ENCODE measurements at regions of chr2 and their contacts with region 1.

Region 1: DNA sequence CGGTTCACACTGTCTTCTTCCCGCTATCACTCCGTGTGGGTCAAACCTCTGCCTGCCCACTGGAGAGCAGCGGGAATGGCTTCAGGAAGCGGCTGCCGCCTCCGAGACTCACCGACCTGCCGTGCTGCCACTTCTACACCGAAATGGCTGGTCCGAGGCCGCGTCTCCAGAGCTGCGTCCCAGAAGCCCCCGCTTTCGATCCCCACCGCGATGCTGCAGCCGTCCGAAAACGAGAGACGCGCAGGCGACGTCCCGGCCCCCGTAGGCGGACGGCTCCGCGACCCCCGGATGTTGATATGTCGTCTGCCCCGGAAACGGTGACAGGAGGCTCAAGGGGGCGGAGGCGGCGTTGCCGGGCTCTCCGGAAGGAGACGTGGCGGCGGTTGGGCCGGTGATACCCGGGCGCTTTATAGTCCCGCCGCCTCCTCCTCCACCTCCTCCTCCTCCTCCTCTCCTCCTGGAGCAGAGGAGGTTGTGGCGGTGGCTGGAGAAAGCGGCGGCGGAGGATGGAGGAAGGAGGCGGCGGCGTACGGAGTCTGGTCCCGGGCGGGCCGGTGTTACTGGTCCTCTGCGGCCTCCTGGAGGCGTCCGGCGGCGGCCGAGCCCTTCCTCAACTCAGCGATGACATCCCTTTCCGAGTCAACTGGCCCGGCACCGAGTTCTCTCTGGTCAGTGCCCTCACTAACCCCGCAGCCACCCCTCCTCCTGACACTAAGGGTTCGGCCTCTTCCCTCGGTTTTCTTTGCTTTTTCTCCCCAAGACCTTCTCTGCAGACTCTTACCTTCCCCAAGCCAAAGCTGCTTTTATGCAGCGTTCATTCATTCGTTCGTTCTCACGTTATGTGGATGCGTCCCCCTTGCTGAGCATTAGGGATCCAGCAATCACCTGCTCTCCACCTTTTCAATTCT is at the starts of genes ASB3 and ERLEC1:
- DNase-seq: peak; percentile 75 to 84
- H3K4me3 ChIP-seq: peak within 1 kb of the TSS; percentile 75 to 84 (median 76)
- H3K27ac ChIP-seq: peak within 1 kb of the TSS; percentile 84 to 86
- H3K4me1 ChIP-seq: peaks cover 3 to 10% of the 10 kb centered on the region in 2 donors
- H3K27me3 ChIP-seq: no peaks in the 10 kb centered on the region
- CTCF ChIP-seq: no peak
- POLR2A ChIP-seq: no peak
- total RNA-seq, gene ASB3: 22.0 to 37.9 (median 22.7) TPM
- total RNA-seq, gene ERLEC1: 82.9 to 114 (median 87.1) TPM

Region 2: GRCh38 chr2:52676056-52676455 is 1110.9 kb before region 1 on chr2:
- intact Hi-C with region 1: no loop called
- DNase-seq: no peak
- H3K4me3 ChIP-seq: no peak overlapping the region
- H3K27ac ChIP-seq: no peak overlapping the region
- H3K4me1 ChIP-seq: no peaks in the 10 kb centered on the region
- H3K27me3 ChIP-seq: no peaks in the 10 kb centered on the region
- CTCF ChIP-seq: no peak
- POLR2A ChIP-seq: no peak

Region 3: DNA sequence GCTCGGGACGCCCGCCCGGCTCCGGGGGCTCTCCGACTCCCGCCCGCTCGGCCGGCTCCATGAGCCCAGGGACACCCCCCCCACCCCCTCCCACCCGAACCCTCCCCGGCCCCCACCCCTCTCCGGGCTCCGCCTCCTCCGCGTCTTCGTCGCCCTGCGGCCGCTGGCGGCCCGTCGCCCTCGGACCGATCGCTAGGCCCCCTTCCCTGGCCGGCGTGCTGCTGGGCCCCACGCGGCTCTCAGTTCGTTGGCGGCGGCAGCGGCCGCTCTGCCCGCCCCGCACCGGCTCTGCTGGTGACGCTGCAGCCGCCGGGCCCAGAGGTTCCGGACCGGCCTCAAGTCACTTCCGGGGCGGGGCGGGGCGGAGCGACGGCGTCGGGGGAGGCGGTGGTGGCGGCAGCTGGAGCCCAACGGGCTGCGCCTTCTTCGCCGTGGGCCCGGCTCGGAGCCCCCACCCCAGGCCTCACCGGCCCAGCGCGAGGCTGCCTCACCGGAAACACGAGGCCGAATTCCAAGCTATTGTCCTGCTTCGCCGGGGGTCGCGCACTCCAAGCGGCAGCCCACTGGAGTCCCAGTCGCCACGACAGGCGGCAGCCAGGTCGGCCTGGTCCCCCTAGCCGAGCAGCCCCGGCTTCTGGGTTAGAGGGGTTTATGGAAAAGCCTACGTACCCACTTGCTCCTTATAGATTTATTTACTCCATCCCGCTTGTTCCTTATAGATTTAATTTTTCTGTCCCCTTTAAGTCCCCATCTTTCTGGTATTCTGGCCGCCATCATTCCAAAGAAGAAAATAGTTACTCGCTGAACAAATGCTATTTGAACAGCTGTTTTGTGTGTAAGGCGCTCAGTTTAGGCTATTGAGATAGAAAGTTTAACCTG is 184.0 kb after region 1 on chr2 and contains the start of gene PSME4:
- intact Hi-C with region 1: loop called (anchors 5 kb)
- DNase-seq: peak; percentile 91 to 95
- H3K4me3 ChIP-seq: peak within 1 kb of the TSS; percentile 77 to 98 (median 95)
- H3K27ac ChIP-seq: peak within 1 kb of the TSS; percentile 96 to 98
- H3K4me1 ChIP-seq: no peaks in the 10 kb centered on the region
- H3K27me3 ChIP-seq: no peaks in the 10 kb centered on the region
- CTCF ChIP-seq: no peak
- POLR2A ChIP-seq: peak; percentile 92
- total RNA-seq, gene PSME4: 45.3 to 176 (median 75.1) TPM

Measured in breast epithelium (tissue), 4 donors.